ENCODE measurements at regions of chr16 and their contacts with region 1.

Region 1: DNA sequence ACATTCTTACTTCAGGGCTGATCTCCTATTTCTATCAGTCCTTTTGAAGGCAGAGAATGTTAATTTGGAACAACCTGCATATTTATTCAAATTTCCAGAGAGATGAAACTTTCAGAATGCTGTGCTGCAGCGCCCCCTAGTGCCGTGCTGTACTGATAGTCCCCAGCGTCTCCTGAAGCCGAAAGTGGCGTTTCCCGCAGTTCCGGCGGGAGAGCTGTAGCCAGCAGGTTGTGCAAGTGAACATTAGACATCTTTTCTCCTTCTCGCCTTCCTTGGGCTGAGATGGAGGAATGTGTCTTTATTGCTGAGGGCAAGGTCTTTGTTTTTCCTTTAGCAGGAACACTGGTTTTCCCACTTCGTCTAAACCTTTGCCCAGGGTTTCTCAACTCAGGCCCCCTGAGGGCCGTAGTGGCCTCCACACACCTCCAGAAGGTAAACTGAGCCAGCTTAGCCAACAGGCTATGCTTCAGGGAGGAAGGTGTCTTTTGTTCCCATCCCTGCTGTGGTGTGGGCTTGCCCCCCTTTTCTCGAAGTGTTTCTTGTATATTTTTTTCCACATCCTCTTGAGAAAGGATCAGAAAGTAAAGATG is 26.4 kb downstream of the USP10 start:
- DNase-seq: peak; percentile 93

Region 2: DNA sequence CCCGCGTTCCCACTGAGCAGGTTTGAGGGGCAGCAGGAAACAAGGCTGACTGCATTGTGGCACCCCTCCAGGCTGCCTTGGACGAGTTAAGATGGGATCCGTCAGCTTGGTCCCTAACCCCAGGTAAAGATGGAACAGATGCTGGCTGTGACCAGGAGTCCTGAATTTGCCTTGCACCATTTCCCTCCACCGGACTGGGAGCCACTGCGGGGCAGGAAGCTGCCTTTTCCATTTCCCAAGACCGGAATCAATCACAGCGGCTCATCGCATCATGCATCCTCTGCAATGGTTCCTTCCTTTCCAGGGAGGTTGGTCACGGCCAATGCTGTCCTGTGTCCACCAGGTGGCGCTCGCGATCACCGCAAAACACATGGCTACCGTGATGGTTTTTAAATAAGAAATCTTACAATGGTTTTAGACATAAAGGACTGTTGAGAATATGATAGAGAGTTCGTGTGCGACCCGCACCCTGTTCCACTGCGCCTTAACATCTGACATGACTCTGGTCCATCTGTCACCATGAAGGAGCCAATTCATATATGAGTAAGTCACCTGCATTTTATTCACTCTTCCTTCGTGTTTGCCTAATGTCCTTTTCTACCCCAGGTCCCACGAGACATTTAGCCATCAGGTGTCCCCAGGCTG is 214.9 kb before region 1 on chr16:
- intact Hi-C with region 1: loop called (anchors 2 kb)
- DNase-seq: peak; percentile 94

Region 3: DNA sequence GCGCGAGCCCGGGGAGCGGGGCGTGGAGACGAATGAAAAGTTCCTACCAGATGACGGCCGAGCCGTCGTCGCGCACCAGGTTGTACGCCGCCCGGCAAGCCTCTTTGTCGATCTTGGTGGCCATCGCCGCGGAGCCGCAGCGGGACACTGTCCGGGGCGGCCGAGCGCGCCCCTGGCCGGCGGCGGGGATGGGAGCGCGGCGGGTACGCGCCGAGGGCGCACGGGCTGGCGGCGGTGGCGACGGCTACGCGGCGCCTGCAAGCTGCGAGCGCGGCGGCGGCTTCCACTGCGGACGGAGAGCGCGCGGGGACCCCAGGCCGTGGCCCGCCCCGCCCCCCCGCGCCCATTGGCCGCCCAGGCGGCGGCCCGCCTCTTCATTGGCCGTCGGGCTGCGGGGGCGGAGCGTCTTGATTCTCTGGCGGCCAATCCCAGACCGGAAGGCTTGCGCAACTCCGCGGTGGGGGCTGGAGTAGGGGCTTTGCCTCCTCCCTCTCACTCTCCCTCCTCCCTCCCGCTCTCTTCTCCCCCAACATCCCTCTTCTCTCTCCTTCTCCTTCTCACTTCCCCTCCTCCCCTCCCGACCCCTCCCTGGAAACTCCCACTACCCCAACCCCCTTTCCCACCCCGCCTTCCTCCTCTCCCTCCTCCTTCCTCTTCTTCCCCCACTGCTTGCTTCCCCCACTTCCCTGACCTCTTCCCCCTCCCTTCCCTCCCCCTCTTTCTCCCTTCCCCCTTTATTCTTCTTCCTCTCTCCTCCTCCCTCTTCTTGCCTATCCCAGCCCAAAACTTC is 108.2 kb before region 1 on chr16 and contains the start of gene COTL1:
- intact Hi-C with region 1: loop called (anchors 2 kb)
- DNase-seq: peak; percentile 98
- total RNA-seq, gene COTL1: 11.0 TPM

Region 4: GRCh38 chr16:84672276-84673202 is 53.6 kb before region 1 on chr16:
- intact Hi-C with region 1: loop called (anchors 1 kb)
- DNase-seq: peak; percentile 90